Activated CD4-positive, alpha-beta memory T cell treated with anti-CD3 and anti-CD28 coated beads for 36 hours (primary cell): ENCODE measurements at regions of chr15 and their contacts with region 1.

Region 1: GRCh38 chr15:100580414-100580813 is 21.6 kb downstream of the LINS1 start:
- DNase-seq: no peak
- H3K4me3 Mint-ChIP-seq: peak overlapping the region; percentile 46
- H3K27ac Mint-ChIP-seq: peak overlapping the region; percentile 88
- H3K4me1 Mint-ChIP-seq: peaks cover 51% of the 10 kb centered on the region
- H3K27me3 Mint-ChIP-seq: no peaks in the 10 kb centered on the region

Region 2: GRCh38 chr15:99556011-99556410 is 1024.4 kb before region 1 on chr15:
- CTCF ChIA-PET with region 1: no interaction called
- POLR2A ChIA-PET with region 1: no interaction called
- intact Hi-C with region 1: loop called (anchors 5 kb)
- DNase-seq: no peak
- H3K4me3 Mint-ChIP-seq: no peak overlapping the region
- H3K27ac Mint-ChIP-seq: no peak overlapping the region
- H3K4me1 Mint-ChIP-seq: no peaks in the 10 kb centered on the region
- H3K27me3 Mint-ChIP-seq: no peaks in the 10 kb centered on the region

Region 3: GRCh38 chr15:100565591-100565990 is 14.8 kb before region 1 on chr15:
- CTCF ChIA-PET with region 1: no interaction called
- POLR2A ChIA-PET with region 1: no interaction called
- intact Hi-C with region 1: no loop called
- DNase-seq: no peak
- H3K4me3 Mint-ChIP-seq: no peak overlapping the region
- H3K27ac Mint-ChIP-seq: peak overlapping the region; percentile 40
- H3K4me1 Mint-ChIP-seq: peaks cover 9% of the 10 kb centered on the region
- H3K27me3 Mint-ChIP-seq: no peaks in the 10 kb centered on the region

Region 4: GRCh38 chr15:100596792-100597191 is 16.4 kb after region 1 on chr15:
- CTCF ChIA-PET with region 1: no interaction called
- POLR2A ChIA-PET with region 1: interaction called, 3 read pairs
- intact Hi-C with region 1: loop called (anchors 1 kb)
- DNase-seq: peak; percentile 98
- H3K4me3 Mint-ChIP-seq: peak overlapping the region; percentile 76
- H3K27ac Mint-ChIP-seq: no peak overlapping the region
- H3K4me1 Mint-ChIP-seq: peaks cover 74% of the 10 kb centered on the region
- H3K27me3 Mint-ChIP-seq: no peaks in the 10 kb centered on the region

Region 5: DNA sequence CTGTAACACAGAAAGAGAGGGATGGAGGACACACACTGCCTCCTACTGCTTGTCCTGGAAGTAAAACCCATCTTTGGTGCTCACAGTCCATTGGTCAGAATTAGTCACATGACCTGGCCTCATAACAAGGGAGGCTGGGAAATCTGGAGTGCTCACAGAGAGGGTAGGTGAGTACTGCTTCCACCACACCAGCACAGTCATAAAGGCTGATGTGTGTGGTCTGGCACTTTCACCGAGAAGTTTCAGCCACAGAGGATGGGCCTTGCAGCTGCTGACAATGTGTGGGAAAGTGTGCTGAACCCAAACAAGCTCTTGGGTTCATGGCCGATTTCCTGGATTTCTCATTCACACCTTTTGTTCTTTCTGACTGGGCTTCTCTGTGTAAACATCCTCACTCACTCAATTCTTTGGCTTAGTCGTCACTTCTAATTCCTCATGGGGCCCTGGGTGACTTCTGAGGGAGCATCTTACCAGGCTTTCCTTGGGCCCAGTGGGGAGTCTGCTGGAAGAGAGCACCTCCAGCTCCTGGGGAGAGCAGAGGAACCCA is 122.7 kb after region 1 on chr15:
- CTCF ChIA-PET with region 1: no interaction called
- POLR2A ChIA-PET with region 1: no interaction called
- intact Hi-C with region 1: no loop called
- DNase-seq: peak; percentile 78
- H3K4me3 Mint-ChIP-seq: no peak overlapping the region
- H3K27ac Mint-ChIP-seq: no peak overlapping the region
- H3K4me1 Mint-ChIP-seq: peaks cover 6% of the 10 kb centered on the region
- H3K27me3 Mint-ChIP-seq: peaks cover 19% of the 10 kb centered on the region